Naive thymus-derived CD4-positive, alpha-beta T cell (primary cell): ENCODE measurements at regions of chr4 and their contacts with region 1.

Region 1: DNA sequence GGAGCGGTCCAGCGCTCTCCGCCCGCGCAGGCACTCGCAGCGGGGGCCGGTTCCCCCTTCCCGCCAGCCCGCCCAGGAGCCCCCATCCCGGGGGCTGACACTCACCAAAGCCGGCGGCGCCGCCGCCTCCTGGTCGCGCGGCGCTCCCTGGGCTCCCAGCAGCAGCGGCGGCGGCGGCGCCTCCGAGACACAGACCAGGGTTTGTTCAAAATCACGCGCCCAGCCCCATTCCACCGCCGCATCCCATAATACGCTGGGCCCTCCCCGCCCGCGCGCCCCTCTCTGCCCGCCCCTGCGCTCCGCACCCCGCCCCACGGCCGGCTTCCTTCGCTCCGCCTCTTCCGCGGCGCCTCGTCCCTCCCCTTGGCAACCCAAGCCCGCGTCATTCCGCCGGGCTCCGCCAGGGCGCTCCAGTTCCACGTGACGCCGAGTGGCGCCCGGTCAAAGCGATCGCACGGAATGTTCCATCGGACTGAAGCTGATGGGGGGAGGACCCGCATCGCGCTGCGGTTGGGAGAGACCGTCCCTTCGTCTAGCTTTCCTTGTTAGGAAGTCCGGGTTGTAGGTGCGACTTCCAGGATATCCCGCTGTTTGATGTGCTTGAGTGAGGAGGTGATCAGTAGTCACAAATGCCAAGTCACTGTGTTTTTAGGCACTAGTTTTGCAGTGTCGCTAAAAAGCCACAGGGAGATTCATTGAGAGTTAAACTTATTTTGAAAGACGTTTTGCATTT is 2.2 kb upstream of the LIN54 start:
- DNase-seq: peak; percentile 93 to 99 (median 97)
- ATAC-seq: peak; percentile 94
- H3K4me3 ChIP-seq: peak overlapping the region; percentile 69
- H3K4me3 Mint-ChIP-seq: peak overlapping the region; percentile 89 to 98 (median 94)
- H3K27ac ChIP-seq: peak overlapping the region; percentile 73
- H3K27ac Mint-ChIP-seq: peak overlapping the region; percentile 84 to 98 (median 93)
- H3K4me1 ChIP-seq: peaks cover 15 to 22% of the 10 kb centered on the region in 2 donors
- H3K4me1 Mint-ChIP-seq: peaks cover 32 to 54% (median 46%) of the 10 kb centered on the region in 7 donors
- H3K27me3 ChIP-seq: no peaks in the 10 kb centered on the region
- H3K27me3 Mint-ChIP-seq: no peaks in the 10 kb centered on the region

Region 2: GRCh38 chr4:82284858-82285805 is 727.7 kb before region 1 on chr4:
- CTCF ChIA-PET with region 1: no interaction called
- POLR2A ChIA-PET with region 1: no interaction called
- intact Hi-C with region 1: loop called in 1 of 2 experiments (anchors 2 kb)
- DNase-seq: peak; percentile 97 to 100 (median 99)
- ATAC-seq: peak; percentile 94
- H3K4me3 ChIP-seq: peak overlapping the region; percentile 55
- H3K4me3 Mint-ChIP-seq: peak overlapping the region; percentile 70 to 91 (median 86)
- H3K27ac ChIP-seq: peak overlapping the region; percentile 71
- H3K27ac Mint-ChIP-seq: peak overlapping the region; percentile 53 to 94 (median 83)
- H3K4me1 ChIP-seq: peaks cover 4 to 11% of the 10 kb centered on the region in 2 donors
- H3K4me1 Mint-ChIP-seq: peaks cover 9 to 22% (median 13%) of the 10 kb centered on the region in 7 donors
- H3K27me3 ChIP-seq: no peaks in the 10 kb centered on the region
- H3K27me3 Mint-ChIP-seq: peaks cover 0 to 28% (median 0%) of the 10 kb centered on the region in 5 donors

Region 3: GRCh38 chr4:82798168-82799005 is 214.5 kb before region 1 on chr4 and contains the start of gene SCD5:
- CTCF ChIA-PET with region 1: no interaction called
- POLR2A ChIA-PET with region 1: no interaction called
- intact Hi-C with region 1: no loop called
- DNase-seq: peak in 4 of 9 donors; percentile 4 to 52 (median 20)
- ATAC-seq: peak; percentile 90
- H3K4me3 ChIP-seq: peak within 1 kb of the TSS; percentile 50
- H3K4me3 Mint-ChIP-seq: peak within 1 kb of the TSS; percentile 72 to 92 (median 84)
- H3K27ac ChIP-seq: no peak within 1 kb of the TSS
- H3K27ac Mint-ChIP-seq: peak within 1 kb of the TSS in 1 of 9 donors; percentile 23
- H3K4me1 ChIP-seq: peaks cover 0 to 11% of the 10 kb centered on the region in 2 donors
- H3K4me1 Mint-ChIP-seq: peaks cover 13 to 25% (median 20%) of the 10 kb centered on the region in 7 donors
- H3K27me3 ChIP-seq: peaks cover 0 to 7% of the 10 kb centered on the region in 2 donors
- H3K27me3 Mint-ChIP-seq: peaks cover 38 to 78% (median 53%) of the 10 kb centered on the region in 5 donors
- total RNA-seq, gene SCD5: 0.13 to 1.5 (median 0.44) TPM in 3 of 5 experiments, not detected in the others

Region 4: GRCh38 chr4:82851885-82852750 is 160.7 kb before region 1 on chr4:
- CTCF ChIA-PET with region 1: interaction called, 3 read pairs
- POLR2A ChIA-PET with region 1: no interaction called
- intact Hi-C with region 1: loop called in 1 of 2 experiments (anchors 1 kb)
- DNase-seq: peak in 6 of 9 donors; percentile 20 to 38 (median 32)
- ATAC-seq: peak; percentile 58
- H3K4me3 ChIP-seq: no peak overlapping the region
- H3K4me3 Mint-ChIP-seq: no peak overlapping the region
- H3K27ac ChIP-seq: no peak overlapping the region
- H3K27ac Mint-ChIP-seq: peak overlapping the region in 4 of 9 donors; percentile 21 to 47 (median 30)
- H3K4me1 ChIP-seq: no peaks in the 10 kb centered on the region
- H3K4me1 Mint-ChIP-seq: peaks cover 0 to 17% (median 3%) of the 10 kb centered on the region in 7 donors
- H3K27me3 ChIP-seq: no peaks in the 10 kb centered on the region
- H3K27me3 Mint-ChIP-seq: no peaks in the 10 kb centered on the region

Region 5: DNA sequence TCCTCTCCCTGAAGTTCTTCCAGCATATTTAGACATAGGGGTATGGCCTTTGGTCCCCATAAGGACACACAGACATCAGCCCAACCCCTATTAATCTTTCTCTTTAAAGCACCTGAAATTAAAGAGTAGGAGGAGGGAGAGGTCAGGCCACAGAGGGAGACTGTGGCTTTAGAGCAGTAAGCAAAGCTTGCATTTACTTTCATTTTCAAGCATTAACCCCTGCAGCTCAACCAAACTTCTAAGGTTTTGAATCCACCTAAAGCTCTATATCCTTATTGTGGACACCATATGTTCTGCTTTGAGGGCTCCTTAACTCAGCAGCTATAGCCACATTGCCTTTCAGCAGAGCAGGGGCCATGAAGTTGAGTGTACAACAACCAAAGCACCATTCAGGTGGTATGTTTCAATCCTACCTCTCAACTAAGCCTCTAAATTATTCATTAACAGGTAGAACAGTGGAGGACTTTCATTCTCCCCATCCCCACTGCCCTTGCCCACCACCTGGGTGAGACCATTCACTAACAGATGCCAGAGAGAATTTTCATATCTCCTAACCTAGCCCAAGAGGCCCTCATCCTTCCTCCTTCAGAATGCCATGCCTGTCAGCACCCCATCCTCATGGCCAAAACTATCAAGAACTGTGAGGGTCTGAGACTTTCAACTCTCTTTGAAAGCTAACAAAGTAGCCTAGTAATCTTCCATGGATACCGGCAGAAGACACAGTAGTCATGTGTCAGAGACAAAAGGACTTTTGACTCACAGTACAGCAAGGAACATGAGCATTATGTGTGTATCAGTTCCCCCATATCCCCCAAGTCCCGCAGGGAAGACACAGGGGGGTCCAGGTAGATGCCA is 23.1 kb before region 1 on chr4:
- CTCF ChIA-PET with region 1: no interaction called
- POLR2A ChIA-PET with region 1: interaction called, 4 read pairs
- intact Hi-C with region 1: loop called in 1 of 2 experiments (anchors 1 kb)
- DNase-seq: peak in 5 of 9 donors; percentile 4 to 26 (median 11)
- ATAC-seq: peak; percentile 75
- H3K4me3 ChIP-seq: peak overlapping the region; percentile 9
- H3K4me3 Mint-ChIP-seq: peak overlapping the region; percentile 33 to 72 (median 60)
- H3K27ac ChIP-seq: peak overlapping the region; percentile 38
- H3K27ac Mint-ChIP-seq: peak overlapping the region; percentile 8 to 92 (median 59)
- H3K4me1 ChIP-seq: peaks cover 5 to 9% of the 10 kb centered on the region in 2 donors
- H3K4me1 Mint-ChIP-seq: peaks cover 14 to 37% (median 25%) of the 10 kb centered on the region in 7 donors
- H3K27me3 ChIP-seq: no peaks in the 10 kb centered on the region
- H3K27me3 Mint-ChIP-seq: no peaks in the 10 kb centered on the region

Region 6: GRCh38 chr4:83083925-83084475 is 71.1 kb after region 1 on chr4:
- CTCF ChIA-PET with region 1: no interaction called
- POLR2A ChIA-PET with region 1: interaction called, 4 read pairs
- intact Hi-C with region 1: loop called in 1 of 2 experiments (anchors 1 kb)
- DNase-seq: peak; percentile 36 to 86 (median 77)
- ATAC-seq: peak; percentile 98
- H3K4me3 ChIP-seq: no peak overlapping the region
- H3K4me3 Mint-ChIP-seq: peak overlapping the region; percentile 43 to 74 (median 62)
- H3K27ac ChIP-seq: peak overlapping the region; percentile 70
- H3K27ac Mint-ChIP-seq: peak overlapping the region; percentile 88 to 99 (median 94)
- H3K4me1 ChIP-seq: peaks cover 12 to 29% of the 10 kb centered on the region in 2 donors
- H3K4me1 Mint-ChIP-seq: peaks cover 25 to 55% (median 43%) of the 10 kb centered on the region in 7 donors
- H3K27me3 ChIP-seq: no peaks in the 10 kb centered on the region
- H3K27me3 Mint-ChIP-seq: no peaks in the 10 kb centered on the region

Region 7: DNA sequence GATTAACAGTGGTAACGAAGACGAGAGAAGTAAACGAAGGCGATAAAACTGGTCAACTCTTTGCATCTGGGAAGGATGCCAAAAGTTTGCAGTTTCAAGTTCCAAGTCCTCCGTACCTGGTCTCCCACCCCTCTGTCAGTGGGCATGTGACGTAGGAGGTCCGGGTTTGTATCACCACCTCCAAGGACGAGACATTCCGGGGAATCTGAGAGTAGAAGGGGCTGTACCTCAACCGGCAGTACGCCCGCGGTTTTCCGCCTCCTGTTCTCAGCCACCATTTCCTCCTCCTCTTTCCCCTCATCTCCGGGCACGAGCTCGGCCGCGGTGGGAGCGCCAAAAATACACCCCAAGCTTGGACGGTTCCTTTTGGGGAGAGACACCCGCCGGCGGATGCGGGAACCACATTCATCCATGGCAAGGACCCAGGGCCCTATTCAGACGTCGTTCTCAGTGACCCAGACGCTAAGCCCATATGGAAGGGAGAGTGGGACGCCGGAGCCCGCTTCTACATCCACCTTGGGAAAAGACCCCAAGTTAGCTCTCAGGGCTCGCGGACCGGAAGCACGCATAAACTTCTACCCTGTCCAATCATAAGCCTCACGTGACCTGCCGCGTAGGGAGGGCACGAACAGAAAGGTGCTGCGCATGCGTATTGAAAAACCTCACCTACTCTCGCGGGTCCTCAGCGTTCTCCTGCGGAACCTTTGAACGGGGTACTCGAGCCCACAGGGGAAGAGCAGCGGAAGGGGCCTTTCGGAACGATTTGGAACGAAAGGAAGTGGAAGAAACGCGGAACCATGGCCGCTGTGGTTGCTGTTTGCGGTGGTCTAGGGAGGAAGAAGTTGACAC is 442.7 kb after region 1 on chr4 and contains the starts of genes HELQ and MRPS18C:
- CTCF ChIA-PET with region 1: no interaction called
- POLR2A ChIA-PET with region 1: interaction called, 4 read pairs
- intact Hi-C with region 1: loop called (anchors 1 kb)
- DNase-seq: peak; percentile 77 to 98 (median 97)
- ATAC-seq: peak; percentile 94
- H3K4me3 ChIP-seq: peak within 1 kb of the TSS; percentile 75
- H3K4me3 Mint-ChIP-seq: peak within 1 kb of the TSS; percentile 98 to 100 (median 99)
- H3K27ac ChIP-seq: peak within 1 kb of the TSS; percentile 98
- H3K27ac Mint-ChIP-seq: peak within 1 kb of the TSS; percentile 100
- H3K4me1 ChIP-seq: peaks cover 24 to 33% of the 10 kb centered on the region in 2 donors
- H3K4me1 Mint-ChIP-seq: peaks cover 21 to 75% (median 58%) of the 10 kb centered on the region in 7 donors
- H3K27me3 ChIP-seq: no peaks in the 10 kb centered on the region
- H3K27me3 Mint-ChIP-seq: peaks cover 0 to 3% (median 0%) of the 10 kb centered on the region in 5 donors
- total RNA-seq, gene HELQ: 14.1 to 53.9 (median 40.4) TPM
- total RNA-seq, gene MRPS18C: 18.4 to 56.1 (median 46.7) TPM

Region 8: GRCh38 chr4:84050015-84050414 is 1037.2 kb after region 1 on chr4:
- CTCF ChIA-PET with region 1: no interaction called
- POLR2A ChIA-PET with region 1: no interaction called
- intact Hi-C with region 1: no loop called
- DNase-seq: no peak
- ATAC-seq: no peak
- H3K4me3 ChIP-seq: no peak overlapping the region
- H3K4me3 Mint-ChIP-seq: no peak overlapping the region
- H3K27ac ChIP-seq: no peak overlapping the region
- H3K27ac Mint-ChIP-seq: no peak overlapping the region
- H3K4me1 ChIP-seq: no peaks in the 10 kb centered on the region
- H3K4me1 Mint-ChIP-seq: no peaks in the 10 kb centered on the region
- H3K27me3 ChIP-seq: no peaks in the 10 kb centered on the region
- H3K27me3 Mint-ChIP-seq: no peaks in the 10 kb centered on the region